MCF 10A (cell line): ENCODE measurements at regions of chr10 and their contacts with region 1.

Region 1: DNA sequence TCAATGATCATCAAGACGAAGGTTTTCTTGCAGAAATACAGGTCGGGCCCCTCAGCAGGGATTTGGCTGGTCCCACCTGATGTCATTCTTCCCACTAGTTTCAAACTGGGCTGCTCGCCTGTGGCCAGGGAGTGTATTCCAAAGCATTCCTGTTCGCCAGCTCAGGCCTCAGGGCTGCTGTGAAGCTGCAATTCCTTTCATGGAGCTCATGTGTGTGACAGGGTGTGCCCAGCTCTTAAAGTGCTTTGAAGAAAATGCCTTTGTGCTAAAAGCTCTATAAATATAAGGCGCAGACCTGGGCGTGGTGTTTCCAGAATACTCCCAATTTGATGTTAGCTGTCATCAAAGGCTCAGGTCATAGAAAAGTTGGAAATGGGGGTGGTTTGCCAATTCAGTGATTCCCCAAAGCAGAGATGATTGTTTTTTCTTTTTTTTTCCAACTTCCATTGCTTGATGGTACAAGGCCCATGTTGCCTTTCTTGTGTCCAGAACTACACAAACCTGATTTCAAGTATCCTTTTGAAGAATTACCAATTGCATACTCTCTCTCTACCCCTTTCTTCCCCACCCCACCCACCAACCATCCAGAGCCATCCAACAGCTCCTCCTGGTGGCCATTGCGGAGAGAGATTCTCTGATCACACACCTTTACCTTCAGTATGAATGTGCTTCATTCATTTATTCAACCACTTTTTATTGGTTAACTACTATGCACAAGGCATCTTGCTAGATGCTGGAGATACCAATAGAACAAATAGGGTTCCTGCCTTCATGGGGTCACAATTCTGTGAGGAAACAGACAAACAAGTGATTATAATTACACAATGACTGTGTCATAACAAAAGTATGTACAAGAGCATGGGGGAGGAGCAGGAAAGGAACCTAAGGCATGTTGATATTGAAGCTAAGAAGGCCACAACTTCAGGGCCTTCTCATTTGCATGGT is 297.3 kb upstream of the LYZL1 start:
- DNase-seq: peak; percentile 79
- H3K4me3 Mint-ChIP-seq: no peak overlapping the region
- H3K27ac Mint-ChIP-seq: peak overlapping the region; percentile 78
- H3K4me1 Mint-ChIP-seq: peaks cover 40% of the 10 kb centered on the region
- H3K27me3 Mint-ChIP-seq: no peaks in the 10 kb centered on the region
- CTCF ChIP-seq: peak; percentile 85

Region 2: GRCh38 chr10:28663576-28664313 is 327.9 kb before region 1 on chr10:
- CTCF ChIA-PET with region 1: interaction called, 19 read pairs
- POLR2A ChIA-PET with region 1: interaction called, 4 read pairs
- intact Hi-C with region 1: loop called (anchors 1 kb)
- DNase-seq: peak; percentile 84
- H3K4me3 Mint-ChIP-seq: no peak overlapping the region
- H3K27ac Mint-ChIP-seq: no peak overlapping the region
- H3K4me1 Mint-ChIP-seq: peaks cover 18% of the 10 kb centered on the region
- H3K27me3 Mint-ChIP-seq: peaks cover 18% of the 10 kb centered on the region
- CTCF ChIP-seq: peak; percentile 92

Region 3: GRCh38 chr10:28892816-28893547 is 98.6 kb before region 1 on chr10:
- CTCF ChIA-PET with region 1: interaction called, 4 read pairs
- POLR2A ChIA-PET with region 1: interaction called, 5 read pairs
- intact Hi-C with region 1: loop called (anchors 1 kb)
- DNase-seq: peak; percentile 73
- H3K4me3 Mint-ChIP-seq: no peak overlapping the region
- H3K27ac Mint-ChIP-seq: no peak overlapping the region
- H3K4me1 Mint-ChIP-seq: peaks cover 17% of the 10 kb centered on the region
- H3K27me3 Mint-ChIP-seq: no peaks in the 10 kb centered on the region
- CTCF ChIP-seq: no peak

Region 4: GRCh38 chr10:29131952-29132820 is 140.6 kb after region 1 on chr10:
- CTCF ChIA-PET with region 1: interaction called, 6 read pairs
- POLR2A ChIA-PET with region 1: interaction called, 3 read pairs
- intact Hi-C with region 1: loop called (anchors 1 kb)
- DNase-seq: peak; percentile 44
- H3K4me3 Mint-ChIP-seq: no peak overlapping the region
- H3K27ac Mint-ChIP-seq: no peak overlapping the region
- H3K4me1 Mint-ChIP-seq: peaks cover 8% of the 10 kb centered on the region
- H3K27me3 Mint-ChIP-seq: peaks cover 5% of the 10 kb centered on the region
- CTCF ChIP-seq: no peak